ENCODE measurements at regions of chr1 and their contacts with region 1.

Region 1: DNA sequence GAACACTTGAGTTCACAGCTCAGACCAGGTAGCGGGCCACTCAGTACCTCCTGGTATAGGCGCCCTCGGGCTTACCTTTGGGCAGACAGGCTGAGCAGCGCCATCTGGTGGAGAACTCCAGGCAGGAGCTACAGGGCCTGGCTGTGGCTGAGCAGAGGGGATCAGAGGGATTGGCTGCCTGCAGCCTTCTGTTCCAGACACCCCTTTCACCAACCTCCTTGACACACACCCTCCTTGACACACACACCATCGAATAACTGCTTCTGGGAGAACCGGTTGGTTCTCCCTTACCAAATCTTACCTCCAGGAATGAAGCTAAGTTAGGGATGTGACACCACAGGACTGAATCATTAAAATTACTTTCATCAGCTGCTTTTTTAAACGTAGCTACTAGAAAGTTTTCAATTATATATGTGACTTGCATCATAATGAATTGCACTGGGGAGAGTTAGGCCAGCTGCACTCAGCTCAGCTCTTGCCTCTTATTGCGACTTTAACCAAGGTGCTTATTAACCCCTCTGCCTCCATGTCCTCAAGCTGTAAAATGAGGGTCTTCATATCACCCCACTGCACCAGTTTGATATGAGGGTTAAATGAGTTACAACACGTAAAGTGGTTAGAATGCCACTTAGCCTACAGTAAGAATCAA is 6.6 kb downstream of the LIN28A start:
- DNase-seq: peak; percentile 85 to 94
- H3K4me3 ChIP-seq: peak overlapping the region in 2 of 4 experiments; percentile 11 to 52; a peak in 4 of 8 replicates
- H3K27ac ChIP-seq: peak overlapping the region; percentile 63; the same call in 1 of the 2 replicates
- H3K4me1 ChIP-seq: peaks cover 24 to 47% (median 35%) of the 10 kb centered on the region in 4 experiments
- H3K27me3 ChIP-seq: no peaks in the 10 kb centered on the region
- CTCF ChIP-seq: peak; percentile 92 to 98 (median 96)
- EP300 ChIP-seq: no peak; a peak in 1 of 3 replicates
- POLR2A ChIP-seq: peak in 1 of 2 experiments; percentile 58; a peak in 1 of 3 replicates
- RAD21 ChIP-seq: peak; percentile 79 to 90

Region 2: DNA sequence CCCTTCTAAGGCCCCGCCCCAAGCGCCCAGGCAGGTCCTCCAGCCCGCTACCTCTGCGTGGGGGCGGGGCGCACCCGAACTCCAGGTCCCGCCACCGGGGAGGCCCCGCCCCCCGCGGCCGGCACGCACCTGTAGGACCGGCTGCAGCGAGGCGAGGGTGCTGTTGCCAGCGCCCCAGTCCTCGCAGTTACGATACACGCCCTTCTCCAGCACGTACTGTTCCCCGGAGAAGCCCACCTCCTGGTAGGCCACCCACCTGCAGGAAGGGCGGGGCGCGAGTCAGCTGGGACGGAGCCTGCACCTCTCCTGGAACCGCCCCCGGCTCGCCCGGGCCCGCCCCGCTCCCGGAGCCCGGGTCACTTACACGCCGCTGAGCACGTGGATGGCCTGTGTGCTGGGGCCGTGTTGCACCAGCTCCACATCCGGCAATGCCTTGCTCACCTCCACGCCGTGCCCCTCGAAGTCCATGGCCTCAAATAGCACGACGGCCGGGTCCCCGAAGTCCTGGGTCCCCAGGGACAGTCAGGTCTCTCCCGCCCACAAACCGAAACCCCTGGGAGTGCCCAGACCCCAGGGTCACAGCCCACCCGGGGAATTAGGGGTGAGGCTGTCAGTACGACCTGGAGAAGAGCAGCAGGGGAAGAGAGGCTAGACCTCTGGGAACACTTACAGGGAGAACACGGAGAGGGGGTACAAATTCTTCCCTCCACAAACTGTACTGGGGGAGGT is 80.6 kb before region 1 on chr1:
- CTCF ChIA-PET with region 1: interaction called, 6 read pairs
- POLR2A ChIA-PET with region 1: interaction called, 32 read pairs
- DNase-seq: peak; percentile 67 to 97
- H3K4me3 ChIP-seq: peak overlapping the region; percentile 55 to 86 (median 68)
- H3K27ac ChIP-seq: 0 out of 2 replicates have a peak overlapping the region, but pooled peaks have one; percentile 39
- H3K4me1 ChIP-seq: peaks cover 3 to 12% (median 6%) of the 10 kb centered on the region in 4 experiments
- H3K27me3 ChIP-seq: peaks cover 0 to 11% (median 5%) of the 10 kb centered on the region in 4 experiments; a peak in 5 of 7 replicates
- CTCF ChIP-seq: no peak
- EP300 ChIP-seq: no peak
- POLR2A ChIP-seq: no peak
- RAD21 ChIP-seq: no peak

Region 3: GRCh38 chr1:26378088-26378878 is 39.0 kb before region 1 on chr1:
- CTCF ChIA-PET with region 1: interaction called, 13 read pairs
- POLR2A ChIA-PET with region 1: interaction called, 15 read pairs
- DNase-seq: no peak
- H3K4me3 ChIP-seq: no peak overlapping the region
- H3K27ac ChIP-seq: no peak overlapping the region
- H3K4me1 ChIP-seq: peaks cover 0 to 2% (median 0%) of the 10 kb centered on the region in 4 experiments; a peak in 2 of 7 replicates
- H3K27me3 ChIP-seq: no peaks in the 10 kb centered on the region
- CTCF ChIP-seq: no peak
- EP300 ChIP-seq: no peak
- POLR2A ChIP-seq: no peak
- RAD21 ChIP-seq: no peak

Region 4: DNA sequence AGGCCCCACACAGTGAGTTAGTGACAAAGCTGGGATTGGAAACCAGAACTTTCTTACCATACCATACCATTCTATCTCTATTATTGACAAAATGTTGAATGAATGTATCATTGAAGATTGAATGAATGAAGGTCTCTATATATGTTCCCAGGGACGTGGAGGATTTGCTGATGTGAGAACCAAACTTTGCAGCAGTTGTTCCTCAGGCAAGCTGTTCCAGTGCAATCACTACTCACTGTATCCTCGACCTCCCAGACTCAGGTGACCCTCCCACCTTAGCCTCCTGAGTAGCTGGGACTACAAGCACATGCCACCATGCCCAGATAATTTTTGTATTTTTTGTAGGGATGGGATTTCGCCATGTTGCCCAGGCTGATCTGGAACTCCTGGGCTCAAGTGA is 18.2 kb before region 1 on chr1:
- CTCF ChIA-PET with region 1: interaction called, 17 read pairs
- POLR2A ChIA-PET with region 1: interaction called, 166 read pairs
- DNase-seq: no peak
- H3K4me3 ChIP-seq: no peak overlapping the region
- H3K27ac ChIP-seq: no peak overlapping the region
- H3K4me1 ChIP-seq: no peaks in the 10 kb centered on the region
- H3K27me3 ChIP-seq: no peaks in the 10 kb centered on the region
- CTCF ChIP-seq: no peak
- EP300 ChIP-seq: no peak
- POLR2A ChIP-seq: no peak
- RAD21 ChIP-seq: no peak

Region 5: DNA sequence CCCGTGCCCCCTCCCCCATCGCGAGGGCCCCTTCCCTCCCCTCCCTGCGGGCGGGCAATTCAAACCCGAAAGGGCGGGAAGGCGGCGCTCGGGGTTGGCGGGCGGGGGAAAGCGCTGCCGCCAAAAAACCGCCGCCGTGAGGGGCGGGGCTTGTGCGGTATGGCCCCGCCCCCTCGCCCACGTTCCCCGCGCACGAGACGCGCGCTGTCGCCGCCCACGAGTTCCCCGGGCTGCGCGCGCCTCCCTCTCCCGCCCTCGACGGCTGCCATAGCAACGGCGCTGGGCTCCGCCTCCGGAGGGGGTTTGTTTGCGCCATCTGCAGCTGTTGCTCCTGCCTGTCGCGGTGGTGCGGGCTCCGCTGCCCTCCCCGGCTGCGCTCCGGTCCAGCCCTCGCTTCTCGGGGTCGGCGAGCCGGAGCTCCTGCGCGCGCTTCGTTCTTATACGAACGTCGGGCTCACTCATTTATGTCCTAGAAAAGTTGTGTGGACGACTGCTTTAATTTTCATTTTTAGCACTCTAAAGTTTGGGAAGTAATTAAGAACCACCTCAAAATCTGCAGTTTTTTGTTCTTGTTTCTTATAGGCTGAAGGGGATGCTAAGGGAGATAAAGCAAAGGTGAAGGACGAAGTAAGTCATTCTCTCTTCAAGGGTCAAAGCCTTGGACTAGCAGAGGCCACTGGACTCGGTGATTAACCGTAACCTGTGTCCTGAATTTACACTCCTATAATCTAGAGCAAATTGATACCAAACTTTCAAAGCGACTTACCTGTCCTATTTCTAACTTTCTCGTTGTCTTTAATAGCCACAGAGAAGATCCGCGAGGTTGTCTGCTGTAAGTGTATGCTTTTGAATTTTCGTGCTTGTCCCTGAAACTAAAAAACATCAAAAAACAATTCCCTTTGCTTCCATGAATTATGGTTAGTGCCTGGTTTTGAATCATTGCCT is 55.9 kb after region 1 on chr1:
- CTCF ChIA-PET with region 1: interaction called, 3 read pairs
- POLR2A ChIA-PET with region 1: interaction called, 73 read pairs
- DNase-seq: peak; percentile 74 to 95
- H3K4me3 ChIP-seq: peak overlapping the region; percentile 71 to 96 (median 82)
- H3K27ac ChIP-seq: peak overlapping the region; percentile 99; the same call in 1 of the 2 replicates
- H3K4me1 ChIP-seq: peaks cover 8 to 13% (median 11%) of the 10 kb centered on the region in 4 experiments
- H3K27me3 ChIP-seq: peaks cover 0 to 4% (median 0%) of the 10 kb centered on the region in 4 experiments; a peak in 2 of 7 replicates
- CTCF ChIP-seq: no peak
- EP300 ChIP-seq: no peak
- POLR2A ChIP-seq: peak in 1 of 2 experiments; percentile 8; a peak in 1 of 3 replicates
- RAD21 ChIP-seq: no peak

Region 6: DNA sequence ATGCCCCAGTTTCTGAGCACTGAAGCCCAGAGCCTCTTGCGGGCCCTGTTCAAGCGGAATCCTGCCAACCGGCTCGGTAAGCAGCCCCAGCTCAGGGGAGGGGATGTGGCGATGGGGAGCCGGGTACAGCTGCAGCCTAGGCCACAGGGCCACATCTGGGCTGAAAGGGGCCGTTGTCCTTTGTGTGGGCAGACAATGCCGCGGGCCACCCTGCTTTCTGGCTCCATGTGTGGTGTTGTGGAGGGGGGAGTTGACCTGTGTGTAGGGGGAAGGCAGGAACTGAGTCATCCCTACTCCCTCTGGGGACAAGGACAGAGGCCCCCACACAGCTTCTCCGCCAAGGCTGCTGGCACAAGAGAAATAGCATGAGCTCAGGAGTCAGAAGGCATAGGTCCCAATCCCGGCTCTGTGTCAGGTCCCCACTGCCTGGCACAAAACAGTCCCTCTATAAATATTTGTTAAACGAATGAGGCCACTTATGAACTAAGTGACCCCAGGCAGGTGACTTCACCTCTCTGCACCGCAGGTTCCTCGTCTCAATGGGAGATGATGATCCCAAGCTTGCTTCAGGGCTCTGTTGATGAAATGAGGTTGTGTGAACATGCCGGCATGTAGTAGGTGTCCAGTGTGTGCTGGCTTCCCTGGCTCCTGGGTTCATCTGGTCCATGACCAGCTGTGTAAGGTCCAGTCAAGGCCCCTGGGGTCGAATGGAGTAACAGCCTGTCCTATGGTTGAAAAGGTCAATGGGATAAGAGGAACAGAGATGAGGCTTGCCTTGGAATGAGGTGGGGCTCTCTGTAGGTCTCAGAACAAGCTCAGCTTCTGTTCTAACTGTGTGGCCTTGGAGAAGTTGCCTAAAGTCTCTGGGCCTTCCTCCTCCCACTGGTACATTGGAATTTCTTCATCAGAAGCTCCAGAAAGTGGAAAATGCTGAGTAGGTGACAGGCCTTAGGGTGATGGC is 138.6 kb after region 1 on chr1:
- CTCF ChIA-PET with region 1: no interaction called
- POLR2A ChIA-PET with region 1: no interaction called
- DNase-seq: no peak
- H3K4me3 ChIP-seq: no peak overlapping the region
- H3K27ac ChIP-seq: no peak overlapping the region
- H3K4me1 ChIP-seq: no peaks in the 10 kb centered on the region
- H3K27me3 ChIP-seq: no peaks in the 10 kb centered on the region; a peak in 1 of 7 replicates
- CTCF ChIP-seq: no peak
- EP300 ChIP-seq: no peak
- POLR2A ChIP-seq: no peak
- RAD21 ChIP-seq: no peak